ENCODE measurements at regions of chr15 and their contacts with region 1.

Region 1: DNA sequence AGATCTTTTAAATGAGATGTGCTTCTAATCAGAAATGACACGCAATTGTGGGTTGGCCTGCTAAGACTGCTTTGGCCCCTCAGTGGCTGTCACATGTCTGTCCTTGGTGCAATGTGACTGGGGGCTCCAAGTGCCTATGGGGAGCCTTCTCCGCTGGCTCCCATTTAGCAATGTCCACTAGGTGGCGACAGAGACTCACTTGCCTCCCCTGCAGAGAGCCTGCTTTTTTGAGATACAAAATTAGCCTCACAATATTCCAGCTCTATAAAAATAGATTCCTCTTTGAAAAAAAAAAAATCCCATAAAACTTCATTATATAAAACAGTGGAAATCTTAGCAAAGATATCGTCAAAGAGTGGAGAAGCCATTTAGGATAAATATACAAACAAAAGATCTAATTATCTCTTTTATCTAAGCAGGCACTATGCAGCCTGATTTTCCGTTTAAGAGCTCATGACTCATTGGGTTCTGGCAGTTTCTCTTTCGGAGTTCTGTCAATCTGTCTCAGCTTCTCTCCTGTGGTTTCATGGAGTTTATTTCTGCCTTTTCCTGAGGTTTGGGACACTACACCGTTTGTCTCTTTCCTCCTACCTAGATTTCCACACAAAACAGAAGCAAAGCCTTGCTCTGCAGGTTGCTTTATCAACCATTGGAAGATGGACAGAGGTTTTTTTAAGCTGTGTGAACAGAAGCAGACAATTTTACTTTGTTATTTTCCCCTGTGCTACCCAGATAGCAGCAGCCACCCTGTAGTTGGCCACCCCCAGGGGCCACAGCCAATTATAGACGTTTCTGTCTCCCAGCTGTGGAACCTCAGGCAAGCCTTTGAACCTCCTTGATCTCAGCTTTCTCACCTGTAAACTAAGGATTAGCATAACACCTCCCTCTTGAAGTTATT is 68.4 kb upstream of the TNFAIP8L3 start:
- DNase-seq: peak; percentile 76
- ATAC-seq: peak; percentile 86
- H3K4me3 Mint-ChIP-seq: no peak overlapping the region
- H3K27ac Mint-ChIP-seq: no peak overlapping the region
- H3K4me1 Mint-ChIP-seq: peaks cover 4% of the 10 kb centered on the region
- H3K27me3 Mint-ChIP-seq: peaks cover 14% of the 10 kb centered on the region

Region 2: DNA sequence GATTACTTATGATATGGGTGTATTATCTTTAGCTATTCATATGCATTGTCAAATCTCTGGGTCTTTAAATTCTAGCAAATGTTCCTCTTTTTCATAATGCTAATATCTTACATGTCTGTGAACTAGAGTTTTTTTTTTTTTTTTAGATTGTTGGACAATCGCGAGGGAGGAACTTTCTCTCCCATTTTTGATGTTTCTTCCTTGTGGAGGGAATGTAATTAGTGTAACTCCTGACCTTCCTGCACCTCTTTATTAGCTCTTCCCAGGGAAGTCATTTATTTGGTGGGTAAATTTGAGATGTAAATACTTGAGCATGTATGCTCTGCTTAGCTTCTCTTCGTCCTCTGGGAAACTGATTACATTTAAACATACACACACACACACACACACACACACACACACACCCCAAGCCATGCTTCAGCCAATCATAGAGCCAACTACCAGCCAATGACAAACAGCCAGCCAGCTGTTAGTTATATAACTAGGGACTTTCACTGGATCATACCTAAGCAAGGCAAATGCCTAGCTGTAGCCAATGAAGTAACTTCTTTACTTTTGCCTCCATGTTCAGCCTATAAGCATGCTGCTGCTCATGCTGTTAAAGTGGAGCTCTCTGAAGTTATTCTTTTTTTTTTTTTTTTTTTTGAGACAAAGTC is 747.2 kb before region 1 on chr15:
- CTCF ChIA-PET with region 1: no interaction called
- POLR2A ChIA-PET with region 1: no interaction called
- DNase-seq: no peak
- ATAC-seq: no peak
- H3K4me3 Mint-ChIP-seq: no peak overlapping the region
- H3K27ac Mint-ChIP-seq: no peak overlapping the region
- H3K4me1 Mint-ChIP-seq: no peaks in the 10 kb centered on the region
- H3K27me3 Mint-ChIP-seq: peaks cover 8% of the 10 kb centered on the region

Region 3: GRCh38 chr15:51185213-51186159 is 22.4 kb after region 1 on chr15:
- CTCF ChIA-PET with region 1: interaction called, 17 read pairs
- POLR2A ChIA-PET with region 1: no interaction called
- DNase-seq: no peak
- ATAC-seq: no peak
- H3K4me3 Mint-ChIP-seq: no peak overlapping the region
- H3K27ac Mint-ChIP-seq: no peak overlapping the region
- H3K4me1 Mint-ChIP-seq: no peaks in the 10 kb centered on the region
- H3K27me3 Mint-ChIP-seq: peaks cover 9% of the 10 kb centered on the region

Region 4: GRCh38 chr15:51192521-51193280 is 29.6 kb after region 1 on chr15:
- CTCF ChIA-PET with region 1: interaction called, 75 read pairs
- POLR2A ChIA-PET with region 1: no interaction called
- DNase-seq: peak; percentile 85
- ATAC-seq: peak; percentile 74
- H3K4me3 Mint-ChIP-seq: no peak overlapping the region
- H3K27ac Mint-ChIP-seq: no peak overlapping the region
- H3K4me1 Mint-ChIP-seq: no peaks in the 10 kb centered on the region
- H3K27me3 Mint-ChIP-seq: peaks cover 22% of the 10 kb centered on the region

Region 5: DNA sequence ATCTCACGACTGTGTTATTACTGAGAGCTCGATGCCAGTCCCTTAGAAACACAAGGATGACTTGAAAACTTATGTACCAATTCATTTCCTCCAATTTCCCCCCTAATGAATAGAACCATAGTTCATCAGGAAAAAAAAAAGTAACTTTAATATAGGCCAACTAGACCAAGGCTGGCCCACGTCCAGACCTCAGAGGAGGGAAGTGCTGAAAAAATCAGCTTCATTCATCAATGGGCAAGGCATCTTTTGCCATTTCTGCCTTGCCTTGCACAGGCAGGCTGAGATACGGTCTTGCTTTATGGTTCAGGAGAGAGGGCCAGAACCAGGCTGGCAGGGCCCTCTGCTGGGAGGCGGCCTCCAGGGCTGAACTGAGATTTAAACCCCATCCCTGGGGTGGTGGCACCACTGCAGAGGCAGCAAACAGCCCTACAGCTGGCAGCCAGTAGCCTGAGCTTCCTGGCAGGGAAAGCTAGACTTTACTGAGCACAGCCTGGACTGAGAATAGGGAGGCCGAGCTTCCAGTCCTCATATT is 35.7 kb after region 1 on chr15:
- CTCF ChIA-PET with region 1: interaction called, 75 read pairs
- POLR2A ChIA-PET with region 1: no interaction called
- DNase-seq: no peak
- ATAC-seq: no peak
- H3K4me3 Mint-ChIP-seq: no peak overlapping the region
- H3K27ac Mint-ChIP-seq: no peak overlapping the region
- H3K4me1 Mint-ChIP-seq: no peaks in the 10 kb centered on the region
- H3K27me3 Mint-ChIP-seq: peaks cover 18% of the 10 kb centered on the region

Region 6: GRCh38 chr15:51281368-51281967 is 118.4 kb after region 1 on chr15:
- CTCF ChIA-PET with region 1: interaction called, 16 read pairs
- POLR2A ChIA-PET with region 1: no interaction called
- DNase-seq: peak; percentile 39
- ATAC-seq: no peak
- H3K4me3 Mint-ChIP-seq: no peak overlapping the region
- H3K27ac Mint-ChIP-seq: no peak overlapping the region
- H3K4me1 Mint-ChIP-seq: peaks cover 5% of the 10 kb centered on the region
- H3K27me3 Mint-ChIP-seq: peaks cover 6% of the 10 kb centered on the region

Region 7: DNA sequence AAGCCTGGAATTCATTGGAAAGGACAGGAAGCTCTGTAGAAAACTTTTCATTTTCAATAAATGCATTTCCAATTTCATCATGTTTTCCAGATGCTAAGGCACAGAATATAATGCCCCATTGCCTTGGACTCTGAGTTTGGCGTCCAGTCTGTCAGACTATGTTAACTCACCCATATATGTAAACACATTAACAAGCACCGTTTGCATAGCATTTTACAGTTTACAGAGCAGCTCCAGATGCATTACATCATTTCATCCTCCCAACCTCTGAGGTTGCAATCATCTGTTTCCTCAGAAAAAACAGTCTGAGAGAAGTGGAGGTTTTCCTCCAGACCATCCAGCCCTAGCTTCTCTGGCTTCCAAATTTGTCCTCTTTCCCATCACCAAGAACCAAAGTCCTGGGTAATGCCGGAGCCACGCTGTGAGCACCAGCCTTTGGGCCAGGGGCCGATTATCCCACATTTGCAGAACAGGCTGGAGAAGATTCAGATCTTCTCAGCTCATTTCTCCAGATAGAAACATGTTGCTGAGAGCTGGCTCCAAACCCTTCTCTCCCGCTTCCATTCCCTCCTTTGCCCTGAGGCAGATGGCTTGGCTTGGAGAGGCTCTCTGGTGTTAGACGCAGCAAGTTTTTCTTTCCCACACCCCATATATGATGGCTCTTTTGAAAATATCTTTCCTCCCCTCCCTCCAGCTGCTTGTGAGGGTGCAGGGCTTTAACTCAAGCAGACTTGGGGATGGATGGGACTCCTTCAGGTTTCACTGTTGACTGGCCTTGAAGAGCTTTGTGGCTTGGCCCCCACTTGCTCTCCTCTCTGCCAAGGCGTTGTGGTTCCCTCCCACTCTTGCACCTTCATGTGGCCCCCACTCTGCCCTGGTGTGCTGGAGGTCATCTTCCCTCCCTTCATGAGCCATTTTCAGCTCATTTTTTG is 149.3 kb after region 1 on chr15:
- CTCF ChIA-PET with region 1: no interaction called
- POLR2A ChIA-PET with region 1: no interaction called
- DNase-seq: no peak
- ATAC-seq: no peak
- H3K4me3 Mint-ChIP-seq: no peak overlapping the region
- H3K27ac Mint-ChIP-seq: no peak overlapping the region
- H3K4me1 Mint-ChIP-seq: no peaks in the 10 kb centered on the region
- H3K27me3 Mint-ChIP-seq: peaks cover 6% of the 10 kb centered on the region

Region 8: GRCh38 chr15:51380999-51381795 is 218.1 kb after region 1 on chr15:
- CTCF ChIA-PET with region 1: interaction called, 47 read pairs
- POLR2A ChIA-PET with region 1: no interaction called
- DNase-seq: peak; percentile 48
- ATAC-seq: peak; percentile 82
- H3K4me3 Mint-ChIP-seq: no peak overlapping the region
- H3K27ac Mint-ChIP-seq: no peak overlapping the region
- H3K4me1 Mint-ChIP-seq: no peaks in the 10 kb centered on the region
- H3K27me3 Mint-ChIP-seq: peaks cover 3% of the 10 kb centered on the region

Measured in activated CD8-positive, alpha-beta T cell treated with anti-CD3 and anti-CD28 coated beads, Interleukin-2, amount 10 ng/mL, durations not matched to agents 7 days and 5 days (primary cell).